CD8-positive, alpha-beta T cell (primary cell): ENCODE measurements at regions of chr4 and their contacts with region 1.

Region 1: DNA sequence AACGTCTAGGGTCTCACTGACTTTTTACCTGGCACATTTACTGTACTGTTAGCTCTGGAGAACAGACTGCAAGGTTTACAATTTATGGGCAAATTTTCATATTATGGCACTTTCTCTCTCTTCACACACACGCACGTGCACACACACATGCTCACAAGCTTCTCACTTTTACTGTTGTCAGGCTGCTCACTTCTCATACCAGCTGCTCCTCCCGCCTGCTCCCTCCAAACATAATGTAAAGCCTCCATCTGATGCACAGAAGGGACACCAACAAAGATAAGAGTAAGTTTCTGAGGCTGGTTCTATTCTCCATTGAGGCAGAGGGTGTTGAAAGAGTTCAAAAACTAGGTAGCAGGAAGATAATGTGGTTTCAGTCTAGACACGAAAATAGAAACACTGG is 128.9 kb upstream of the DCLK2 start:
- DNase-seq: no peak
- ATAC-seq: no peak
- H3K4me3 ChIP-seq: no peak overlapping the region
- H3K4me3 Mint-ChIP-seq: no peak overlapping the region
- H3K27ac ChIP-seq: no peak overlapping the region
- H3K27ac Mint-ChIP-seq: no peak overlapping the region
- H3K4me1 ChIP-seq: no peaks in the 10 kb centered on the region
- H3K4me1 Mint-ChIP-seq: no peaks in the 10 kb centered on the region
- H3K27me3 ChIP-seq: no peaks in the 10 kb centered on the region
- H3K27me3 Mint-ChIP-seq: peaks cover 8% of the 10 kb centered on the region
- CTCF ChIP-seq: no peak

Region 2: GRCh38 chr4:149630079-149630478 is 319.3 kb before region 1 on chr4:
- CTCF ChIA-PET with region 1: no interaction called
- POLR2A ChIA-PET with region 1: no interaction called
- intact Hi-C with region 1: loop called in 1 of 2 experiments (anchors 5 kb)
- DNase-seq: no peak
- ATAC-seq: no peak
- H3K4me3 ChIP-seq: no peak overlapping the region
- H3K4me3 Mint-ChIP-seq: no peak overlapping the region
- H3K27ac ChIP-seq: no peak overlapping the region
- H3K27ac Mint-ChIP-seq: no peak overlapping the region
- H3K4me1 ChIP-seq: no peaks in the 10 kb centered on the region
- H3K4me1 Mint-ChIP-seq: no peaks in the 10 kb centered on the region
- H3K27me3 ChIP-seq: no peaks in the 10 kb centered on the region
- H3K27me3 Mint-ChIP-seq: no peaks in the 10 kb centered on the region
- CTCF ChIP-seq: no peak

Region 3: GRCh38 chr4:150039274-150040127 is 90.1 kb after region 1 on chr4:
- CTCF ChIA-PET with region 1: no interaction called
- POLR2A ChIA-PET with region 1: no interaction called
- intact Hi-C with region 1: no loop called
- DNase-seq: peak in 1 of 9 experiments; percentile 1
- ATAC-seq: no peak
- H3K4me3 ChIP-seq: no peak overlapping the region
- H3K4me3 Mint-ChIP-seq: no peak overlapping the region
- H3K27ac ChIP-seq: no peak overlapping the region
- H3K27ac Mint-ChIP-seq: no peak overlapping the region
- H3K4me1 ChIP-seq: no peaks in the 10 kb centered on the region
- H3K4me1 Mint-ChIP-seq: no peaks in the 10 kb centered on the region
- H3K27me3 ChIP-seq: no peaks in the 10 kb centered on the region
- H3K27me3 Mint-ChIP-seq: no peaks in the 10 kb centered on the region
- CTCF ChIP-seq: no peak

Region 4: DNA sequence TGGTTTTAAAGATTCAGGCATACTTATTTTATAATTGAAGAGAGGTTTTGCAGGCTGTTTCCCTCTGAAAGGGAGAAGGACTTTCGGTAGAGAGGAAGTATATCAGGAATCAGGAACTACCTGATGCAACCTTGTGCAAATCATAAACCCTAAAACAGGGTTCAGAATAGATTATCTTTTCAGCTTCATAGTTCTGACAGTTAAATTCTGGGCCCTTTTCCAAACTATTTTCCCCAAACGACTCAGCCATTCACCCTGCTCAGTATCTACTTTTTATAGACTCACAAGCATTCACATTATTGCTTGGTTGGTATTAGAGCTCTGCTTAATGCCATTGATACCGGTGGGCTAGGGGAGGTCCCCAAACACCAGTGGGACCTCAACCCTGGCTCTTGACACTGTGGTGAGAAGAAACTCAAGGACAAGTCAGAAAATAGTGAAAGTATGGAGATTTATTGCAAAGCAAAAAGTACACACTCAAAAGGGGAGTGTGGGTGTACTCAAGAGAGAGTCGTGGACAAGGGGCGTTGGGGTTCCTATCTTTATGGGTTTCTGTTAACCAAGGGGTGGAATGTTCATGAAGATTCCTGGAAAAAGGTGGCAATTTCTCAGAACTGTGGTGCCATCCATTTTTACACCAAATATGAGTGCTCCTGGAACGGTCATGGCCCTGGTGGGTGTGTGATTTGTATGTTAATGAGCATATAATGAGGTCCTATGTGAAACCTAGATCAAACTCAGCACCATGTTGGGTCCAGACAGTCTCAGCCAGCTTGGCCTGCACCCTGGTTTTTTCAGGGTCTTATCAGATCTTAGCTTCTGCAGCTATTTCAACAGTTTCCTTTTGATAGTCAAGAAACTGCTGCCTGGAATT is 367.2 kb after region 1 on chr4:
- CTCF ChIA-PET with region 1: no interaction called
- POLR2A ChIA-PET with region 1: no interaction called
- intact Hi-C with region 1: no loop called
- DNase-seq: no peak
- ATAC-seq: no peak
- H3K4me3 ChIP-seq: no peak overlapping the region
- H3K4me3 Mint-ChIP-seq: no peak overlapping the region
- H3K27ac ChIP-seq: no peak overlapping the region
- H3K27ac Mint-ChIP-seq: no peak overlapping the region
- H3K4me1 ChIP-seq: no peaks in the 10 kb centered on the region
- H3K4me1 Mint-ChIP-seq: no peaks in the 10 kb centered on the region
- H3K27me3 ChIP-seq: no peaks in the 10 kb centered on the region
- H3K27me3 Mint-ChIP-seq: no peaks in the 10 kb centered on the region
- CTCF ChIP-seq: no peak

Region 5: GRCh38 chr4:150739591-150739990 is 790.2 kb after region 1 on chr4:
- CTCF ChIA-PET with region 1: no interaction called
- POLR2A ChIA-PET with region 1: no interaction called
- intact Hi-C with region 1: no loop called
- DNase-seq: no peak
- ATAC-seq: no peak
- H3K4me3 ChIP-seq: no peak overlapping the region
- H3K4me3 Mint-ChIP-seq: no peak overlapping the region
- H3K27ac ChIP-seq: no peak overlapping the region
- H3K27ac Mint-ChIP-seq: no peak overlapping the region
- H3K4me1 ChIP-seq: no peaks in the 10 kb centered on the region
- H3K4me1 Mint-ChIP-seq: peaks cover 2% of the 10 kb centered on the region
- H3K27me3 ChIP-seq: no peaks in the 10 kb centered on the region
- H3K27me3 Mint-ChIP-seq: no peaks in the 10 kb centered on the region
- CTCF ChIP-seq: no peak